Calu3 (cell line): ENCODE measurements at regions of chr10 and their contacts with region 1.

Region 1: DNA sequence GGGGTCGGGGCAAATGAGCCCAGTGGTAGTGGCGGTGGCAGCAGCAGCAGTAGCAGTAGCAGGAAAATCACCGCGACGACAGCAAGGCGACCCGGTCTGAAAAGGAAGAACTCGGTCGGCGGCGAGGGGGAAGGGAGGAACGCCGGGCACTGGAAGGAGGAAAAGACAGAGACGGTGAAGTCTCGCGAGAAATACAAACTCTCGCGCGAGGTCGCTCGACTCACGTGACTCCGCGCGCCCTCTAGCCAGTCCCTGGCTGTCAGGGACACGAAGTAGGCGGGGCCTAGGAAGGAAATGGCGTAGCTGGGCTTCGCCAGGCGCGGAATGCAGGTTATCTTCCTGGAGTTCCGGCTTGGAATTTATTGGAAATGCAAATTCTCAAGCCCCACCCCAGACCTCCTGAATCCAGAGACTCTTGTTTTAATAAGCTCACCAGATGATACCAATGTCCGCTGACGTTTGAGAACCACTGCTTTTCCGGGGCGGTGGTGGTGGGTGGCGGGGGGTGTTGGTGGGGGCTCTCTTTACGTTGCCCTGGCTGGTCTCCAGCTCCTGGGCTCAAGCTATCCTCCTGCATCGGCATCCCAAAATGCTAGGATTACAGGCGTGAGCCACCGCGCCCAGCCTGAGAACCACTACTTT is at the start of gene SMNDC1:
- DNase-seq: peak; percentile 94
- H3K4me3 Mint-ChIP-seq: peak within 1 kb of the TSS; percentile 74
- H3K27ac Mint-ChIP-seq: peak within 1 kb of the TSS; percentile 93
- H3K4me1 Mint-ChIP-seq: peaks cover 10% of the 10 kb centered on the region
- H3K27me3 Mint-ChIP-seq: no peaks in the 10 kb centered on the region
- CTCF ChIP-seq: no peak
- total RNA-seq, gene SMNDC1: 28.4 and 32.8 TPM in 2 replicates

Region 2: GRCh38 chr10:109883859-109884771 is 420.8 kb before region 1 on chr10:
- CTCF ChIA-PET with region 1: no interaction called
- intact Hi-C with region 1: no loop called
- DNase-seq: peak; percentile 74
- H3K4me3 Mint-ChIP-seq: no peak overlapping the region
- H3K27ac Mint-ChIP-seq: no peak overlapping the region
- H3K4me1 Mint-ChIP-seq: peaks cover 8% of the 10 kb centered on the region
- H3K27me3 Mint-ChIP-seq: no peaks in the 10 kb centered on the region
- CTCF ChIP-seq: peak; percentile 78

Region 3: DNA sequence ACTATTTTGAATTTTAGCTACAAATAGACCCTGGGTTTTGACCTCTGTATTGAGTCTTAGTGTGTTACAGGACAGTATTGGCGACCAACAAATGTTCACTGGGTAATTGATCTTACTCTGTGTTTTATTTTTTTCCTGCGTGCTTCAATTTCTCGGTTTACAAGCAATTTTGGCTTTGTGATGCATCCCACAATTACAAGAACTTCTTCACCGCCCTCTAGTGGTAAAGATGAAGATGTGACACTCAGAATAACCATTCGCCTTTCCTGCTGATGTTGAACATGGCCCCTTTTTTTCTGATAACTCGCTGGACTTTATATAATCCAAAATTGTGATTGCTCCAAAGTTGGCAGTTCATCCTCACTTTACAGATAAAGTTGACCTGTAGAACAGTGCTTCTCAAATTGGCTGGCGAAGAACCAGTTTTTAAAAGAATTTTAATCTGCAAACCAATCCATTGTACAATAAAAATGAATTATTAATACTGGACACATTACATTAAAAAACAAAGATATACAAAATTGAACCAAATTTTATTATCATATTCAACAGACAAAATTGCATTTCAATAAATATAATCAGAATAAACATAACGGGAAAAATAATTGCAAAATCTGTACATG is 242.3 kb after region 1 on chr10:
- CTCF ChIA-PET with region 1: no interaction called
- intact Hi-C with region 1: loop called (anchors 1 kb)
- DNase-seq: no peak
- H3K4me3 Mint-ChIP-seq: no peak overlapping the region
- H3K27ac Mint-ChIP-seq: no peak overlapping the region
- H3K4me1 Mint-ChIP-seq: peaks cover 8% of the 10 kb centered on the region
- H3K27me3 Mint-ChIP-seq: peaks cover 13% of the 10 kb centered on the region
- CTCF ChIP-seq: peak; percentile 41

Region 4: GRCh38 chr10:110600487-110601101 is 295.7 kb after region 1 on chr10:
- CTCF ChIA-PET with region 1: interaction called, 4 read pairs
- intact Hi-C with region 1: loop called (anchors 1 kb)
- DNase-seq: peak; percentile 46
- H3K4me3 Mint-ChIP-seq: no peak overlapping the region
- H3K27ac Mint-ChIP-seq: no peak overlapping the region
- H3K4me1 Mint-ChIP-seq: no peaks in the 10 kb centered on the region
- H3K27me3 Mint-ChIP-seq: no peaks in the 10 kb centered on the region
- CTCF ChIP-seq: no peak

Region 5: GRCh38 chr10:110681023-110681681 is 376.3 kb after region 1 on chr10:
- CTCF ChIA-PET with region 1: interaction called, 3 read pairs
- intact Hi-C with region 1: loop called (anchors 5 kb)
- DNase-seq: peak; percentile 50
- H3K4me3 Mint-ChIP-seq: no peak overlapping the region
- H3K27ac Mint-ChIP-seq: no peak overlapping the region
- H3K4me1 Mint-ChIP-seq: peaks cover 6% of the 10 kb centered on the region
- H3K27me3 Mint-ChIP-seq: peaks cover 16% of the 10 kb centered on the region
- CTCF ChIP-seq: peak; percentile 63